Activated B cell treated with CpG ODN at 0.5 μM for 24 hours (primary cell): ENCODE measurements at regions of chr1 and their contacts with region 1.

Region 1: GRCh38 chr1:109312978-109313775 is 6.4 kb upstream of the MYBPHL start:
- DNase-seq: no peak
- ATAC-seq: no peak
- H3K4me3 Mint-ChIP-seq: no peak overlapping the region
- H3K27ac Mint-ChIP-seq: no peak overlapping the region
- H3K4me1 Mint-ChIP-seq: peaks cover 2% of the 10 kb centered on the region
- H3K27me3 Mint-ChIP-seq: peaks cover 3% of the 10 kb centered on the region
- CTCF ChIP-seq: no peak

Region 2: DNA sequence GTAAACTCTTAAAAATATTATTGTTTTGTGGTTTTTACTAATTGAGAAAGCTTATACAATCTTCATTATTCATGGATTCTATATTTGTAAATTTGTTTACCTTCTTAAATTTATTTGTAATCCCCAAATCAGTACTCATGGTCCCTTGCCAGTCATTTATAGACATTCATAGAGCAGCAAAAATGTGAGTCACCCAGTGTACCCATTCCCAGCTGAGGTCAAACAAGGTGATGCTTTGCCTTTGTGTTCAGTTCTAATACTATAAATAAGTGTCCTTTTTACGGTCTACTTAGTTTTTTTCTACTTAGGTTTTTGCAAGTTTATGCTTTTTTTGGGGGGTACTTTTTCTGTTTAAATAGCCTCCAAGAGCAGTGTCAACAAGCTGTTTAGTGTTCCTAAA is 48.5 kb after region 1 on chr1:
- CTCF ChIA-PET with region 1: no interaction called
- POLR2A ChIA-PET with region 1: no interaction called
- intact Hi-C with region 1: loop called (anchors 5 kb)
- DNase-seq: no peak
- ATAC-seq: no peak
- H3K4me3 Mint-ChIP-seq: no peak overlapping the region
- H3K27ac Mint-ChIP-seq: no peak overlapping the region
- H3K4me1 Mint-ChIP-seq: no peaks in the 10 kb centered on the region
- H3K27me3 Mint-ChIP-seq: peaks cover 17% of the 10 kb centered on the region
- CTCF ChIP-seq: no peak

Region 3: DNA sequence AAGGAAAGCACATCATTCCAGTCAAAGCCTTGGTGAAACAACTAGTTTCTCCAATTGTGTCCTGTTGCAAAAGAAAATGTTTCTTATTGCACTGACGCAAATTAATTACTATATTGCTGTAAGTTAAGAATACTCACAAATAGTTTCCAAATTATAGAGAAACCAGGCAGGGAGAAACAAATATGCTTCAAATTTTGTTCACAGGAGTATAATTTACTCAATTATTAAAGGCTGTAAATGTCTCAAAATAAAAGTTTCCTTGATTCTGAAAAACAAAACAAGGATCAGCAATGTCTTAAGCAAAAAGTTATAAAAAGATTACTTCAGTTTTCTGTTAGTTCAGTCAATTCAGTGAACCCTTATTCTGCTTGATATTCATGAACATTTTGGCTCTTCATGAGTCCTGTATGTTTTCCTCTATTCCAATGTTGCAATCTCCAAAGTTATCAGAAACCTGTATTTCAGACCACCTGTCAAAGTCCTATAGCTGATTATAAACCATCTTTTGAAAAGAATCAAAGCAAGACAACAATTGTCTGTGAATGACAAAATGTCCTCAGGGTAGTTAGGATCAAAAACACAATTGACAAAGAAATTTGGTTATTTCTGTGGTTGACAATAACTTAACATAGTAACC is 141.4 kb after region 1 on chr1:
- CTCF ChIA-PET with region 1: no interaction called
- POLR2A ChIA-PET with region 1: no interaction called
- intact Hi-C with region 1: no loop called
- DNase-seq: no peak
- ATAC-seq: no peak
- H3K4me3 Mint-ChIP-seq: no peak overlapping the region
- H3K27ac Mint-ChIP-seq: no peak overlapping the region
- H3K4me1 Mint-ChIP-seq: no peaks in the 10 kb centered on the region
- H3K27me3 Mint-ChIP-seq: peaks cover 28% of the 10 kb centered on the region
- CTCF ChIP-seq: no peak